A673 (cell line): ENCODE measurements at regions of chr17 and their contacts with region 1.

Region 1: DNA sequence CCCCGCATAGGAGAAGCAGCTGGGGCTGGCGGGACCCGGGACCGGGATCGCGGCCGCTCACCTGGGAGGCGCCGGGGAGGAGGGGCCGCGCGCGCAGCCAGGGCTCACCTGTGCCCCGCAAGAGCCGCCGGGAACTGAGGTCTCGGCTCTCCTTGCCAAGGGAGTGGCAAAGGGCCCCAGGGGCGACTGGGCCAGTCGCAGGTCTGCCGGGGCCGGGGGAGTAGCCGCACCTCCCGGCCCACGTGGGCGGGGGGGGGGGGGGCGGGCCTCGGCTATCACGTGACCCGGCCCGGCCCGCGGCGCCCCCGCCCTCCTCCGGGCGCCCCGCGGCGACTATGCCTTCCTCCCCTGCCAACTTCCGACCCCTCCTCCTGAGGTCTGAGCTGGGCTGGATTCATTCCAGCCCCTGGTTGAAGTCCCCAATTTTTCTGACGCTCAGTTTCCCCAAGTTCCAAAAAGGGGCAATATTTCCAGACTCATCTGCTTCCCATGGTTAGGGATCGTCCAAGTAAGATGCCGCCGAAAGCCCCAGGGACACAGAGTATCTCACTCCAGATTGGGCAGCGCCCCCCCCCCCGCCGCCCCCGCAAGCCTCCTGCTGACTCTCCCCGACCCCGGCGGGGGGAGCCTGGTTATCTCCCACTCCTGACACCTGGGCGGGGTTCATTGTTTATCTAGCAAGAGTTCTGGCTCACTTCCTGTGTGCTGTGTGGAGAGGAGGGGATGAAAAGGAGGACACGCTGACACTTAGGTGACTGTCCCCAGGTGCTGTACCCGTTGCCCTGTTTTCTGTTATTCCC is at the start of gene TMC6:
- DNase-seq: peak; percentile 70
- H3K4me3 ChIP-seq: peak within 1 kb of the TSS; percentile 80
- H3K27ac ChIP-seq: peak within 1 kb of the TSS; percentile 64
- H3K4me1 ChIP-seq: peaks cover 46% of the 10 kb centered on the region
- H3K27me3 ChIP-seq: no peaks in the 10 kb centered on the region
- CTCF ChIP-seq: no peak
- total RNA-seq, gene TMC6: 21.2 and 22.9 TPM in 2 replicates

Region 2: DNA sequence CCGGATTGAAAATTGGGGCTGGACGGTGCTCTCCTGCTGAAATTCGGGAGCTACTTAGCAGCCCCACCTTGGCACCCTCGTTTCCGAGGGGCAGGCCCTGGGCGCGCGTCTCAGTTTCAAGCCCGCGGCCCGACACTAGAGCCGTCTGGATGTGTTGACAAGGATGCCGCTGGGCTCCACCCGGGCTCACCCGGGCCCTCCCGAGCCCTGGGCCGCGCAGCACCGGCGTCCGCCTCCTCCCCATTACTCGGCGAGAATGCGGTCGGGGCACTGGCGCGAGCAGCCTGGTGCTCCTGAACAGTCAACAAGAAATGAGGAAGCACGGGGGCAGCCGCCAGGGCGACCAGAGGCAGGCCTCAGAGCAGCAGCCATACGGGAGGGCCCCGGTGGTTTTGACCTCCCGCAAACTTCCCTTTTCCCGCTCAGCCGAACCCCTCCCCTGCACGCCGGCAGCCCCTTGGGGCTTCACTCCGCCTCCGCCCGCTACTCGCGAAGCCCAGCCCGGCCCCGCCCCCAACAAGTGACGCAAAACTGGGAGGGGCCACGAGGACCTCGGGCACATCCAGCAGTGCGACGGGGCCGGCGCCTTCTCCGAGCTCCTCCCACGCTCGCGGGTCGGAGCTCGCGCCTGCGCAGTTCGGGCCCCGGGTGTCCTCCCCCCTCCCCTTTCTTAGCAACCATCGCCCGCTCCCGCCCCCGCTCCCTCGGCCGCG is 988.4 kb before region 1 on chr17:
- CTCF ChIA-PET with region 1: no interaction called
- POLR2A ChIA-PET with region 1: no interaction called
- intact Hi-C with region 1: no loop called
- DNase-seq: peak; percentile 99
- H3K4me3 ChIP-seq: peak overlapping the region; percentile 93
- H3K27ac ChIP-seq: peak overlapping the region; percentile 83
- H3K4me1 ChIP-seq: peaks cover 20% of the 10 kb centered on the region
- H3K27me3 ChIP-seq: no peaks in the 10 kb centered on the region
- CTCF ChIP-seq: no peak

Region 3: GRCh38 chr17:78168242-78168902 is 39.6 kb after region 1 on chr17 and contains the start of gene SYNGR2:
- CTCF ChIA-PET with region 1: no interaction called
- POLR2A ChIA-PET with region 1: no interaction called
- intact Hi-C with region 1: loop called (anchors 5 kb)
- DNase-seq: peak; percentile 93
- H3K4me3 ChIP-seq: peak within 1 kb of the TSS; percentile 85
- H3K27ac ChIP-seq: peak within 1 kb of the TSS; percentile 60
- H3K4me1 ChIP-seq: peaks cover 11% of the 10 kb centered on the region
- H3K27me3 ChIP-seq: no peaks in the 10 kb centered on the region
- CTCF ChIP-seq: no peak
- total RNA-seq, gene SYNGR2: 55.3 and 59.7 TPM in 2 replicates